MCF 10A (cell line): ENCODE measurements at regions of chr1 and their contacts with region 1.

Region 1: DNA sequence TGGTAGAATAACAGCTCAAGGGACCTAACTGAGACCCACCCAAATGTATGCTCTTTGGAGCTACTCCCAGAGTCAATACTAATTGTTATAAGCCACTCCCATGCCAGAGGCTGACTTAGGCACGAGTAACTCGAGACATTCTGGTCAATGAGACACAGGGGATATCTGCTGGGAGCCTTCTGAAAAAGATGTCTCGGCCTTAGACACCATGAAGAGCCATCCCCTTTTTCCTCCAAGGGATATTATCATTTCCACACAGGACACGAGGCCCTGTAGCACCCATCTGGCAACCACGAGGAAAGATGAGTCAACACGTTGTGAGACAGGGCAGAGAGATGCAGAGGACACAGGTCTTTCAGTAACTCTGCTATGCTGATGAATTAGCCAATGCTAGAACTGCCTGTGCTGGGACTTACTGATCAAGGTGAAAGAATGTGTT is 30.7 kb downstream of the ITPKB start:
- DNase-seq: peak; percentile 93
- H3K4me3 Mint-ChIP-seq: peak overlapping the region; percentile 19
- H3K27ac Mint-ChIP-seq: peak overlapping the region; percentile 91
- H3K4me1 Mint-ChIP-seq: peaks cover 29% of the 10 kb centered on the region
- H3K27me3 Mint-ChIP-seq: no peaks in the 10 kb centered on the region
- CTCF ChIP-seq: no peak

Region 2: DNA sequence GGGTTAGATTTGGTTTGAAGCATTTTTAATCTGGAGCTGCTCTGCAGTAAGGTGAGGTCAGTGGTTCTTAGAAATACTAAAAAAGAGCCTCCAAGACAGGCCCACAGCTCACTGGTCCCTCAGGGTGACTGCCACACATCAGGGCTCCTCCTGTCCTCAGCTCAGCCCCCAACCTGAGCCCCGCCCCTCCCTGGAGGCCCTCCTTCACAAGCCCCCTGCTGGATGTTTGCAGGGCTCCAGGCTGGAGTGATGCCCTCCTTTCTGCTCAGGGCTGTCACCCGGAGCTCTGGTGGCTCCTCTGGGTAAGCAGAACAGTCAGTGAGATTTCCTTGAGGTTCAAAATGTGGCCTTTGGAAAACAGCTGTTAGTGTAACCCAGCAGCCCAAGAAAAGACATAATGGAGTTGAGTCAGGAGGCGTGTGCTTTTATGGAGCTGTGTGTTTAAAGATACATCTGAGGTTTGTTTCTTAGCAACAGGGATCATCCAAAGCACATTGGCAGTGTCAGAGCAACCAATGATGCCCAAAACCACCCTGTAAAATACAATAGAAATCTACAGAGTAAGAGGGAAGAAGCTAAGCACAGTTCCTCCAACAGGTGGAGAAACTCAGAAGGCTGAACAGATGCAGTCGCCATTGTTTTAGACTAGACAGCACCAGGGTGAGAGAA is 138.3 kb before region 1 on chr1:
- CTCF ChIA-PET with region 1: no interaction called
- POLR2A ChIA-PET with region 1: no interaction called
- intact Hi-C with region 1: no loop called
- DNase-seq: peak; percentile 34
- H3K4me3 Mint-ChIP-seq: no peak overlapping the region
- H3K27ac Mint-ChIP-seq: no peak overlapping the region
- H3K4me1 Mint-ChIP-seq: no peaks in the 10 kb centered on the region
- H3K27me3 Mint-ChIP-seq: peaks cover 63% of the 10 kb centered on the region
- CTCF ChIP-seq: no peak

Region 3: DNA sequence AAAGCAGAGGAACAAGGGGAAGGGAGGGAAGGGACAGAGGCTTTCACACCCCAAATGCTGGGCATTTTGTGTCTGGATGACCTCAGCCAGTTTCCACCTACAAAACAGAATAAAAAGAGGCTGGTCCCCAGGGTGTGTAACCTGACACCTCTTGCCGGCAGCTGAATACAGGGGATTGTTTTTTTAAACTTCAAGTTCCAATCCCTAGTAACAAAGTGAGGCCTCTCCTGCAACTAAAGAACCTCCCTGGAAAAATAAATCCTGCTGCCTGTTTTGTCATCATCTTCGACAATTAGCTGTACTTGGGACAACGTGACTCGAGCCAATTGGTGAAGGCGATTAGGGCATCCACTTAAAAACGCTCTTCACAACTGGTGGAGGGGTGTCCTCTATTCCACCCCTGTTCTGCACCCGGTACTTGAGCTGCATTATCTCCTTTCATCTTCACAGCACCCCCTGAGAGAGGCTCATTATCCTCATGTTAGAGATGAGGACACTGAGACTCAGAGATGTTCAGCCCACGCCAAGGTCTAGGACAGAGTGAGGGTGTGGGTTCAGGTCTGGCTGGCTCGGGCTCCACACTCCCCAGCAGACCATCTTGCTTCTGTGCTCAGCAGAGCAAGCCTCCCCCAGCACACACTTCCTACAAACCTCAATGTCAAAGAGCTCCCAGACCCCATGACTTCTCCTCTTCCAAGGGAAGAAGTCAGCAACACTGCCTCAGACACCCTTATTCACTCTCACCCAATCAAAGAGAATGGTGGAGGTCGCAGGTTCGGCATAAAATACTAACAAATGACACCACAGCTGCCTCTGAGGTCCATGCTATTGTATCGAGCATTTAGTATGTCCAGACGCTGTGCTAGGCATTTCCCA is 15.5 kb after region 1 on chr1:
- CTCF ChIA-PET with region 1: interaction called, 18 read pairs
- POLR2A ChIA-PET with region 1: interaction called, 3 read pairs
- intact Hi-C with region 1: no loop called
- DNase-seq: peak; percentile 79
- H3K4me3 Mint-ChIP-seq: no peak overlapping the region
- H3K27ac Mint-ChIP-seq: no peak overlapping the region
- H3K4me1 Mint-ChIP-seq: peaks cover 20% of the 10 kb centered on the region
- H3K27me3 Mint-ChIP-seq: no peaks in the 10 kb centered on the region
- CTCF ChIP-seq: no peak